Calu3 (cell line): ENCODE measurements at regions of chr1 and their contacts with region 1.

Region 1: DNA sequence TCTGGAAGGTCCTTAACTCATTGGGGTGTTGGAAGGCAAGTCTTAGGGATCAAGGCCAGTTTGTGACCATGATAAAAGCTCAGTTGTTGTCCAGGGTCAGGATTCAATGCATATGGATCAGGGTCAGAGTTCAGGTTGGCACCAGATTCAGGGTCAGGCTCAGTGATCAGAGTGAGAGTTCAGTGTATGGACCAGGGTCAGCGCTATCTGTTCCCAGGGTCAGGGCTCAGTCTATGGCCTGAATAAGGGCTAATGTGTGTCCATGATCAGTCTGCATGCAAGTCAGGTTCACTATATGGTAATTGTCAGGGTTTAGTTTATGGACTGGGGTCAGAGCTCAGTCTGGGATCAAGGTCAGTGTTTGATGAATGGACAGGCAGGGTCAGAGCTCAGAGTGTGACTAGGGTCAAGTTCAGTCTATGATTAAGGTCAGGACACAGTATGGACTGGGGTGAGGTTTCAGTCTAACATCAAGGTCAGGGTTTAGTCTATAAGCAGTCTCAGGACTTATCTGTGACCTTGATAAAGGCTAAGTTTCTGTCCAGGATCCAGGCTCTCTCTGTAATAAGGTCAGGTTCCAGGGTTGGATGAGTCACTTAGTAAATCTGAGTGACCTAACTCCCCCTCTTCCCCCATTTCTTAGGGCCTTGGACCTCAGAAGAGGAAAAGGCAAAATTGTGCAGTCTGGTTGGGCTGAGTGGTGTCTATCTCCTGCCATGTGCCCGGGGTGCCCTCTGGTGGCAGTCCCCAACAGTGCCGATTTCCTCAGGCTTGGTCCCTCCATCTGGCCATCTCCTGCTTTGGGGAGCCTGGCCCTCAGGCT is 23.8 kb downstream of the KNCN start:
- DNase-seq: peak; percentile 90
- H3K4me3 Mint-ChIP-seq: no peak overlapping the region
- H3K27ac Mint-ChIP-seq: no peak overlapping the region
- H3K4me1 Mint-ChIP-seq: peaks cover 55% of the 10 kb centered on the region
- H3K27me3 Mint-ChIP-seq: peaks cover 37% of the 10 kb centered on the region
- CTCF ChIP-seq: peak; percentile 95

Region 2: GRCh38 chr1:46442317-46443161 is 85.1 kb before region 1 on chr1:
- CTCF ChIA-PET with region 1: interaction called, 13 read pairs
- intact Hi-C with region 1: no loop called
- DNase-seq: peak; percentile 85
- H3K4me3 Mint-ChIP-seq: peak overlapping the region; percentile 41
- H3K27ac Mint-ChIP-seq: no peak overlapping the region
- H3K4me1 Mint-ChIP-seq: peaks cover 7% of the 10 kb centered on the region
- H3K27me3 Mint-ChIP-seq: peaks cover 53% of the 10 kb centered on the region
- CTCF ChIP-seq: peak; percentile 98

Region 3: GRCh38 chr1:46477153-46477929 is 50.3 kb before region 1 on chr1:
- CTCF ChIA-PET with region 1: interaction called, 6 read pairs
- intact Hi-C with region 1: loop called (anchors 1 kb)
- DNase-seq: peak; percentile 85
- H3K4me3 Mint-ChIP-seq: no peak overlapping the region
- H3K27ac Mint-ChIP-seq: no peak overlapping the region
- H3K4me1 Mint-ChIP-seq: no peaks in the 10 kb centered on the region
- H3K27me3 Mint-ChIP-seq: peaks cover 38% of the 10 kb centered on the region
- CTCF ChIP-seq: peak; percentile 96

Region 4: GRCh38 chr1:46724991-46725735 is 197.5 kb after region 1 on chr1:
- CTCF ChIA-PET with region 1: interaction called, 4 read pairs
- intact Hi-C with region 1: loop called (anchors 5 kb)
- DNase-seq: peak; percentile 73
- H3K4me3 Mint-ChIP-seq: no peak overlapping the region
- H3K27ac Mint-ChIP-seq: no peak overlapping the region
- H3K4me1 Mint-ChIP-seq: no peaks in the 10 kb centered on the region
- H3K27me3 Mint-ChIP-seq: peaks cover 37% of the 10 kb centered on the region
- CTCF ChIP-seq: peak; percentile 69